Prostate gland (tissue), 2 donors: ENCODE measurements at regions of chr16 and their contacts with region 1.

Region 1: GRCh38 chr16:19907161-19907992 is 22.7 kb upstream of the GPRC5B start:
- DNase-seq: peak; percentile 57
- H3K4me3 ChIP-seq: no peak overlapping the region
- H3K27ac ChIP-seq: no peak overlapping the region
- H3K4me1 ChIP-seq: no peaks in the 10 kb centered on the region
- H3K27me3 ChIP-seq: no peaks in the 10 kb centered on the region
- CTCF ChIP-seq: peak; percentile 56 to 91 (median 88)
- POLR2A ChIP-seq: no peak

Region 2: DNA sequence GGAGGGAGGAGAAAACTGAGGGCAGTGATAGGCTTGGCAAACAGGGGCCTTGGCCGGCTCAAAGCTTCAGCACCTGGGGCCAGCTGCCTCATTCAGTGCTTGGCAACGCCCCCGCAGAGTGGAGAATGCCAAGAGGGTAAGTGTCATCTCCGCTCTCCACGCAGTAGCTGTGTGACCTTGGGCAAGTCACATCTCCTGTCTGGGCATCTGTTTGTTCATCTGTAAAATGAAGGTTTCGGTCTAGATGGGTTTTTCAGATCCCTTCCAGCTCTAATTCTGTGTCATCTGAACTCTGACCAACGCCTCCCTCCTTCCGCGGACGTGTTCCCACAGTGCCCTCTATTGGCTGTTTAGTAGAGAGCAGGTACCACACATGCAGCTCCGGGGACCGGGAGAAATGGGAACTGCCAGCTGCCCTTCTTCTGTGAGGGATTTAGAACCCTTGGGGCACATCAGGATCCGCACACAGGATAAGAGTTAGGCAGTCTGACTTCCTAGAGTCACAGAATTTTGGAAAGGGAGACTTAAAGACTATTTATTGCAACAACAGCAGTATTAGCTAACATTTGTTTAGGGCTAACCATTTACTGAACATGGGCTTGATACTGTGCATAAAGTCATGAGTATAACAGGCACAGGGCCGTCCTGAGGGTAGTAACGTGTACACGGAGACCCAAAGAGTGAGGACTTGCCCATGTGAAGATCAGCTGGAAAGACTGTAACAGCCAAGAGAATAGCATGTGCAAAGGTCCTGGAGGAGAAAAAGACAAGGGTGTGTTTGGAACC is 393.1 kb after region 1 on chr16:
- intact Hi-C with region 1: loop called (anchors 5 kb)
- DNase-seq: peak; percentile 47
- H3K4me3 ChIP-seq: no peak overlapping the region
- H3K27ac ChIP-seq: no peak overlapping the region
- H3K4me1 ChIP-seq: no peaks in the 10 kb centered on the region
- H3K27me3 ChIP-seq: no peaks in the 10 kb centered on the region
- CTCF ChIP-seq: peak; percentile 31 to 68 (median 60)
- POLR2A ChIP-seq: no peak

Region 3: GRCh38 chr16:20383106-20384029 is 476.0 kb after region 1 on chr16:
- intact Hi-C with region 1: loop called (anchors 5 kb)
- DNase-seq: peak; percentile 61
- H3K4me3 ChIP-seq: no peak overlapping the region
- H3K27ac ChIP-seq: no peak overlapping the region
- H3K4me1 ChIP-seq: no peaks in the 10 kb centered on the region
- H3K27me3 ChIP-seq: no peaks in the 10 kb centered on the region
- CTCF ChIP-seq: peak; percentile 65 to 79 (median 74)
- POLR2A ChIP-seq: no peak